ENCODE measurements at regions of chr12 and their contacts with region 1.

Region 1: GRCh38 chr12:80140005-80140404 is 40.7 kb downstream of the OTOGL start:
- DNase-seq: no peak
- H3K4me3 ChIP-seq: no peak overlapping the region
- H3K27ac ChIP-seq: no peak overlapping the region
- H3K4me1 ChIP-seq: peaks cover 0 to 9% (median 6%) of the 10 kb centered on the region in 4 donors
- H3K27me3 ChIP-seq: no peaks in the 10 kb centered on the region
- CTCF ChIP-seq: no peak
- EP300 ChIP-seq: no peak
- POLR2A ChIP-seq: no peak

Region 2: GRCh38 chr12:80107221-80107620 is 32.8 kb before region 1 on chr12:
- intact Hi-C with region 1: loop called (anchors 2 kb)
- DNase-seq: no peak
- H3K4me3 ChIP-seq: no peak overlapping the region
- H3K27ac ChIP-seq: no peak overlapping the region
- H3K4me1 ChIP-seq: no peaks in the 10 kb centered on the region
- H3K27me3 ChIP-seq: no peaks in the 10 kb centered on the region
- CTCF ChIP-seq: no peak
- EP300 ChIP-seq: no peak
- POLR2A ChIP-seq: no peak

Region 3: DNA sequence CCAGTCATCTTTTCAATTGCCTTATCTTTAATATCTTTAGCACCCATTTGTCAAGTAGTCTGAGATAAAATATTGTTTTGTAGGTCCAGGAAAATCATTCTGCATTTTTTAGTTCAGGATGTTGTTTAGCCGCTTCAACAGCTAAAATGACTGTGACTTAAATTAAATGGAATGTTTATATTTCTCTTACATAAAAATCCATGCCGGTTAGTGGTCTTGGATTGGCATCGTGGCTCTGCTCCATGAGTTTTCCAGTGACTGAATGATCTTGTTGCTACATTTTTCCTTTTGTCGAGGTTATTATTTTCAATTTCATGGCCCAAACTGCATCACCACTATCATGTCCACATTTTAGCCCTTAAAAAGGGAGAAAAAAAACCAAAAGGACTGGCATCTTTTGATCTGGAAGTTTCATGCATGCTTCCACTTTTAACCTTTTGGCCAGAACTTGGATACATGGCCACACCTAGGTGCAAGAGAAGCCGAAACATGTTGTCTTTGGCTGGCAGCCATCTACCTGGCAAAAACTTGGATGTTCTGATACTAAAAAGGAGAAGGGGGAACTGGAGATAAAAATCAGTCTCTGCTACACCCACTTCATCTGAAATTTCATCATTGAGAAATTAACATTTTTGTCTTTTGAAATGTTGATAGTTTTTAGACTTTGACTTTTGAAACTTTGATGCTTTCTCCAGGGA is 101.7 kb after region 1 on chr12:
- intact Hi-C with region 1: no loop called
- DNase-seq: no peak
- H3K4me3 ChIP-seq: no peak overlapping the region
- H3K27ac ChIP-seq: no peak overlapping the region
- H3K4me1 ChIP-seq: peaks cover 0 to 10% (median 5%) of the 10 kb centered on the region in 4 donors
- H3K27me3 ChIP-seq: no peaks in the 10 kb centered on the region
- CTCF ChIP-seq: no peak
- EP300 ChIP-seq: no peak
- POLR2A ChIP-seq: no peak